ENCODE measurements at regions of chr1 and their contacts with region 1.

Region 1: GRCh38 chr1:46303038-46303871 is at the starts of genes LRRC41 and UQCRH:
- DNase-seq: peak; percentile 91

Region 2: GRCh38 chr1:46021046-46021996 is 281.9 kb before region 1 on chr1:
- CTCF ChIA-PET with region 1: no interaction called
- POLR2A ChIA-PET with region 1: no interaction called
- DNase-seq: no peak

Region 3: GRCh38 chr1:46113948-46114347 is 189.3 kb before region 1 on chr1:
- CTCF ChIA-PET with region 1: no interaction called
- POLR2A ChIA-PET with region 1: no interaction called
- DNase-seq: no peak

Region 4: DNA sequence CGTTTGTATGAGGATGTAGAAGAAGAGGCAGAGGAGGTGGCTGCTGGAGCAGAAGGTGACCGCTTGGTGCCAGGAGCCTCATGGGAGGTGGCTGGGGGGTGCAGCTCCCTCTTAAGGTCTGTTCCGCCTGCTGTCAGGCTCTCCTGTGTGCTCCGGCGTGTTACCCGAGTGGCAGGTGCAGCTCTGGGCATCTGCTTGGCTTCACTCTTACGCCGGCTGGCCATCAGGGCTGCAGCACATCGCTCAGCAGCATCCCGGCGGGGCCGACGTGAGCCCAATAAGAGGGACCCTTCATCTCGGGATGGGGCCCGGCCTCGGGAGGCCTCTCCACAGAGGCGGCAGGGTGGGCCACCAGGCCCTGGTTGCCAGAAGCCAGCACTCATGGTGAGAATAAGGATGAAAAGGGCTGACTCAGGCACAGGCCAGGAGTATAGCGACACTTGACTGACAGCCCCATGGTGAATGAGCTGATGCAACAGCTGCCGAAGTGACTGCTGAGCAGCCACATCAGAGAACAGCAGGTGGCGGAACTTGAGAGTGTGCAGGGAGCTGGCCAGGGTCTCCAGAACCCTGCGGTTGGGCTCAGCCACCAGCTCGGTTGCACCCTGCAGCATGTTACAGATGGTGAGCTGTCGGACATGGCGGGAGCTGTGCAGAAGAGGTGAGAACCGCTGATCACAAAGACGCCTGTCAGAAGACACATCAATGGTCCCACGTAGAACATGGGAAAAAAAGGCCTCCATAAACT is 17.4 kb before region 1 on chr1:
- CTCF ChIA-PET with region 1: no interaction called
- POLR2A ChIA-PET with region 1: interaction called, 10 read pairs
- DNase-seq: peak; percentile 30

Region 5: GRCh38 chr1:46340404-46341221 is 37.4 kb after region 1 on chr1 and contains the start of gene NSUN4:
- CTCF ChIA-PET with region 1: no interaction called
- POLR2A ChIA-PET with region 1: interaction called, 29 read pairs
- DNase-seq: peak; percentile 82

Measured in HEK293T (cell line).